HepG2 (cell line): ENCODE measurements at regions of chr2 and their contacts with region 1.

Region 1: DNA sequence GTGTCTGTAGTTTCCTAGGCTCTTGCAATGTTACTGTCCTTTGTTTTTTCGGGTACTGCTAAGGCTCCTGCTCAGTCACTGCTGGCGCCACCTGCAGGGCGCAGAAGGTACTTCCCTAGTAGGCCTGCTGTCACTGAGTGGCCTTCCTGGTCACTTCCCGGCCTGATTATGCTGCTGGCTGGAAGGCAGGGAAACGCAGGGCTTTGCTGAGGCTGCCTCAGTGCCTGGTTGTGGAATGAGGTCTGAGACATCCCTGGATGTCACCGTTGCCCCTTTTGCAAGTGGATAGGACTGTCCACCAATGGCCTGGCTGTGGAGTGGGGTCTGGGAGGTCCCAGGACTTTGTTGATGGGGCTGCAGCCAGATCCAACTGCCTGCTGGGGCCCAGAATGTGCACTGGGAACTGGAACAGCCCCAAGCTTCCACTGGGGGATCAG is 13.1 kb downstream of the DAW1 start:
- DNase-seq: peak; percentile 75
- ATAC-seq: peak; percentile 100
- H3K4me3 ChIP-seq: no peak overlapping the region; a peak in 1 of 6 replicates
- H3K27ac ChIP-seq: no peak overlapping the region
- H3K4me1 ChIP-seq: peaks cover 20% of the 10 kb centered on the region; the same call in 1 of the 2 replicates
- H3K27me3 ChIP-seq: no peaks in the 10 kb centered on the region; a peak in 1 of 5 replicates
- CTCF ChIP-seq: peak; percentile 99
- EP300 ChIP-seq: no peak
- POLR2A ChIP-seq: no peak
- RAD21 ChIP-seq: peak; percentile 80

Region 2: GRCh38 chr2:227125506-227125905 is 759.0 kb before region 1 on chr2:
- CTCF ChIA-PET with region 1: interaction called, 4 read pairs
- POLR2A ChIA-PET with region 1: no interaction called
- in situ Hi-C with region 1: no loop called
- intact Hi-C with region 1: loop called (anchors 1 kb)
- DNase-seq: peak; percentile 25
- ATAC-seq: peak; percentile 85
- H3K4me3 ChIP-seq: no peak overlapping the region
- H3K27ac ChIP-seq: no peak overlapping the region
- H3K4me1 ChIP-seq: no peaks in the 10 kb centered on the region
- H3K27me3 ChIP-seq: peaks cover 0 to 11% of the 10 kb centered on the region in 2 experiments; a peak in 2 of 5 replicates
- CTCF ChIP-seq: peak; percentile 63
- EP300 ChIP-seq: no peak
- POLR2A ChIP-seq: no peak
- RAD21 ChIP-seq: no peak

Region 3: DNA sequence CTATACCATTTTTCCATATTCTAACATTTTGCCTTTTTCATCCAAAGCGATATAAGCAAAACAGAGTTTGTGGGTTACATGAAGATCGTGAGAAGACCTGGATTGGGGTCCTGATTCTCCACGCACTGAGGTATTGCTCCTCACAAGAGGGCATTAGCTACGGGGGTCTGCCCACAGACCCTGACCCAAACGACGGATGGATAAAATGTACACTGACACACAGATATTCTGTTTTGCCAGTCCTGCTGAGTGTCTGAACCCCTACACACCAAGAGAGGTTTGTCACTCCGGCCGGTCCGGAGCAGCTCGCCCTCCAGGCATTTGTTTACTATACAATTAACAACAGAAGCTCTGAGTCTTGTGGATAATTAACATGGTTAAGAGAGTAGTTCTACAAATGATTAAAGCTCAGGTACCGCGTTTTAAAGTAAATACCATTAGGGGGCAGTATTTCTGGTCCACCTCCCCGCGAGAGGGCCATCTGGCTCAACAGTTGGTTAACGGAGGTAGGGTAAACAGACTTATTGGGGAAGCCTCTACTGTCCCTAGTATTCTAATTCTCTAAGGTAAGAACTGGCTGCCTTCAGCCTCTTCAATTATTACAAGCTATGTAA is 110.4 kb before region 1 on chr2:
- CTCF ChIA-PET with region 1: interaction called, 16 read pairs
- POLR2A ChIA-PET with region 1: no interaction called
- in situ Hi-C with region 1: no loop called
- intact Hi-C with region 1: loop called (anchors 1 kb)
- DNase-seq: peak; percentile 69
- ATAC-seq: peak; percentile 96
- H3K4me3 ChIP-seq: peak overlapping the region in 2 of 3 experiments; percentile 37 to 47; a peak in 3 of 6 replicates
- H3K27ac ChIP-seq: no peak overlapping the region
- H3K4me1 ChIP-seq: peaks cover 59% of the 10 kb centered on the region
- H3K27me3 ChIP-seq: peaks cover 0 to 2% of the 10 kb centered on the region in 2 experiments; a peak in 1 of 5 replicates
- CTCF ChIP-seq: peak; percentile 76
- EP300 ChIP-seq: no peak
- POLR2A ChIP-seq: no peak
- RAD21 ChIP-seq: peak; percentile 71; the same call in 1 of the 2 replicates